Gastrocnemius medialis (tissue), 4 donors: ENCODE measurements at regions of chr15 and their contacts with region 1.

Region 1: DNA sequence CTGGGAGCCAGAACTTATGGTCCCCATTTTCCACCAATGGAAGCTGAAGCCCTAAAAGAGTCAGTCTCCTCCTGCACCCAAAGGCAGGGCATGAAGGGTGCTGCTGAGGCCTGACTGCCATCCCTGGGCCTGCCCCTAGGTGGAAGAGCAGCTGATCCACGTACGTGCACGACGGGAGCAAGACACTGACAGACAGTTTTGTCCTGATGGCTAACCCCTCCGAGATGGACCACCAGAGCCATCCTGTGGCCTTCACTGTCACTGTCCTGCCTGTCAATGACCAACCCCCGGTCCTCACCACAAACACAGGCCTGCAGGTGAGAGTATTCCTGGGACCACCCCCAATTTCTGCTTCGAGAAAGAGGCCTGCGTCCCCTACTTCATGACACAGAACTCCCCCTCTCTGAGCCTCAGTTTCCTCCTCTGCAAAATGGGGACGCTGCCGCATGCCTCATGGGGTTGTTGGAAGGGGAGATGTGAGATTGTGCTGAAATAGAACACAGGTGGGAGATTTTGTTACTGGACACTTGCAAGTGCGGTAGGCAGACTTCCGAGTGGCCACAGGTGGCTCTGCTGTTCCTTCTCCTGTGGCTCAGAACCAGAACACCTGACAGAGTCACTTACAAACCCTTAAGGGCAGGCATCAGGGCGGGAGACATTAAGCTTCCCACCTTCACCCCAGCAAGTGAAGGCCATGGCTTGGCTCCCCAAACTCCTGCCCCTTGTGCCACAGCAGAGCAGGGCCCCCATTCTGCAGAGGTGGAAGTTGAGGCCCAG is 175.3 kb downstream of the TBC1D2B start:
- DNase-seq: no peak
- ATAC-seq: no peak
- H3K4me3 ChIP-seq: no peak overlapping the region
- H3K27ac ChIP-seq: no peak overlapping the region
- H3K4me1 ChIP-seq: no peaks in the 10 kb centered on the region
- H3K27me3 ChIP-seq: no peaks in the 10 kb centered on the region
- CTCF ChIP-seq: no peak
- POLR2A ChIP-seq: no peak

Region 2: DNA sequence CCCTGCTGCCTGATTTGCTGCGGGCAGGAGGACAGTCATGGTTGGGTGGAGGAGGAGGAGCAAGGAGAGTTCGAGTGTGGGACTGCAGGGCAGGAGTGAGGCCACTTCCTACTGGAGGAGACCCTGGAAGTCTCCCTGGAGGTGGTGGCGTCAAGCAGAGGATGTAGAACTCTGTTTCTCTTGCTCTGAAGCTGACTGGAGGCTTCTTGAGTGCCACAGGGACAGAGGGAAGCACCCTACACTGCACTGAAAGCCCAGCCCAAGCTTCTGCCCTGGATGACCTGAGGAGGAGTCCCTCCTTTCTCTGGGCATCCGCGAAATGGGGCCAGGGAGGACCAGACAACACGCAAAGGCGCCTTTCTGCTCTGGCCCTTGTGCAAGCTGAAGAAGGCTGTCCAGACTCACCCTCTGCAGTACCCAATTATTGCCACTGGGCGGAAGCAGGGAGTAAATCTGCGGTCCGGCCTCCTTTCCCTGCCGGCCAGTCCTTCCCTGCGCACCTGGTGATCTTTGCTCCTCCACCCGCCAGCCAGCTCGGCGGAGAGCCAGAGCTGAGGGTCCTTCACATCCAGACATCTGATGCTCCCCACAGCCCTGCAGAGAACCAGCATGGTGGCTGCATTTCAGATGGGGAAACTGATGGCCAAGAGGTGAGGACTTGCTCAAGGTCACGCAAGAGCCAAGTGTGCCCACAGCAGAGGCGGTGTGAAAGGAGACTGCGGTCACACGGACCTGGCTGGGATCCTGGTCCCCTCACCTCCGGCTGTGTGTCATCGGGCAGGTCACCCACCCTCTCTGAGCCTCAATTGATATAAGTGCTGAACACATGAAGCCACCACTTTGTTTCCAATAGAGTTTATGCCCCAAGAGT is 31.7 kb before region 1 on chr15:
- in situ Hi-C with region 1: no loop called
- intact Hi-C with region 1: loop called (anchors 2 kb)
- DNase-seq: peak; percentile 32 to 54
- ATAC-seq: peak; percentile 78 to 80
- H3K4me3 ChIP-seq: no peak overlapping the region
- H3K27ac ChIP-seq: no peak overlapping the region
- H3K4me1 ChIP-seq: no peaks in the 10 kb centered on the region
- H3K27me3 ChIP-seq: no peaks in the 10 kb centered on the region
- CTCF ChIP-seq: peak; percentile 77 to 92 (median 81)
- POLR2A ChIP-seq: no peak